K562 (cell line): ENCODE measurements at regions of chr15 and their contacts with region 1.

Region 1: DNA sequence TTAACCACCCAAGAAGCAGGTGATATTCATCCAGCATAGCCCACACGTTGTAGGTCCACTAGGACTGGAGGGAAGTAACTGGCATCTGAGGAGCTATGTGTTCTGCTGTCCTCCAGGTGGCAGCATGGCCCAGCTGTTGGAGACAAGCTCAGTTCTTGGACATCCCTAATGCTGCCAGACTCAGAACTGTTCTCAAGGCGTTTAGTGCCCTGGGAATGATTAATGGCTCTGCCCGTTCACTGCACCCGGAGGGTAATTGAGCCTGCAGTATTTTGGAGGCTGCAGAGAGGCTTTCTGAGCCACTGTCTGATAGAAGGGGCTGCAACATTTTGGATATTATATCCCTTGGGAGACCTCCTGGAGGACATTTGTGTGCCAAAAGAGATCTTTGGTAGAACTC is 521.2 kb upstream of the SEMA6D start:
- DNase-seq: peak; percentile 15 to 52 (median 22)
- ATAC-seq: peak; percentile 63; the same call in 2 of the 3 replicates
- H3K4me3 ChIP-seq: no peak overlapping the region
- H3K27ac ChIP-seq: no peak overlapping the region
- H3K4me1 ChIP-seq: no peaks in the 10 kb centered on the region
- H3K27me3 ChIP-seq: no peaks in the 10 kb centered on the region
- CTCF ChIP-seq: peak; percentile 37 to 61 (median 57)
- EP300 ChIP-seq: no peak
- POLR2A ChIP-seq: no peak
- RAD21 ChIP-seq: peak; percentile 76

Region 2: DNA sequence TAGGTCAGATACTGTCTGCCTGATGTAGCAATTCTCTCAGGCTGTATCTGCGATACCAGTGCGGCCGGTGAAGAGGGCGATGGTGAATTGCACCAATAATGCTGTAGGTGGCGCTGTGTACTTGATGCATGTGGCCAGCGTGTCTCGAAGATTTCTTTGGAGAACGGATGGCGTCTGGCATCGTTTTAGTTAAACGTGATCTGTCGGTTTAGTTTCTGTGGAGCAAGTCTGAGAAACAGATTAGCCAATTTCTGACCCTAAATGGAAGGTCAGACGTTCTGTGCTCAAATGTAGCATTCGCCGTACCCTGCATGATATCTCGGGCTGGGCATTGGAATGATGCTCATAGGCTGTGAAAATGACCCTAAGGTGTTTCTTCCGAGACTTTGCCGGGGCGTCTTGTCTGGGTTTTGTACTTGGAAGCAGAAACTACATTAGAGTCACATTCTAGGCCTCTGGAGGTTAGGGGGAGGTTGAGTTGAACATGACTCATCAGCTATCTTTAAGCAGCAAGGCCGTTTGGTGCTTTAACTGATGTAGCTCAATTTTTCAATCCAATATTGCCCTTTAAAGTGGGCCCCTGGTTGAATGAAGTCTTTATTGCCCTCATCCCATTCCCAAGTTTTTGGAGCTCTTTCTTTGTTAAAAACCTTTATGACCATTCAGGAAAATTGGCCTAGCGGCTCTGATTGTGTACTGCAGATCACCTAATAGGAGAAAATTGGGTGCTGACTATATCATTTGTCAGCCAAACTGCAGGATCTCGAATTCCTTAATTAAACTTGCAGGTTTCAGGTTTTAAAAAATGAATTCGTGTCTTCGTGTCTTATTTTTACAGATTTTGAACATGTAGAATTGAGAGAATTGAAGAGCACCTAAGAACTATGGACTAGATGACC is 1481.2 kb before region 1 on chr15:
- CTCF ChIA-PET with region 1: no interaction called
- POLR2A ChIA-PET with region 1: no interaction called
- in situ Hi-C with region 1: no loop called
- intact Hi-C with region 1: loop called (anchors 10 kb)
- DNase-seq: peak; percentile 23 to 60 (median 53)
- ATAC-seq: peak; percentile 87
- H3K4me3 ChIP-seq: no peak overlapping the region
- H3K27ac ChIP-seq: no peak overlapping the region
- H3K4me1 ChIP-seq: peaks cover 0 to 8% of the 10 kb centered on the region in 2 experiments; a peak in 3 of 5 replicates
- H3K27me3 ChIP-seq: no peaks in the 10 kb centered on the region
- CTCF ChIP-seq: peak; percentile 75 to 86 (median 84)
- EP300 ChIP-seq: no peak
- POLR2A ChIP-seq: no peak
- RAD21 ChIP-seq: peak; percentile 36 to 65; a peak in 3 of 4 replicates

Region 3: GRCh38 chr15:48285329-48286214 is 1089.5 kb after region 1 on chr15:
- CTCF ChIA-PET with region 1: interaction called, 4 read pairs
- POLR2A ChIA-PET with region 1: no interaction called
- in situ Hi-C with region 1: no loop called
- intact Hi-C with region 1: loop called (anchors 5 kb)
- DNase-seq: peak; percentile 49 to 72 (median 56)
- ATAC-seq: peak; percentile 91
- H3K4me3 ChIP-seq: no peak overlapping the region
- H3K27ac ChIP-seq: no peak overlapping the region
- H3K4me1 ChIP-seq: no peaks in the 10 kb centered on the region
- H3K27me3 ChIP-seq: no peaks in the 10 kb centered on the region
- CTCF ChIP-seq: peak; percentile 43 to 72 (median 64); a peak in 5 of 6 replicates
- EP300 ChIP-seq: no peak
- POLR2A ChIP-seq: no peak
- RAD21 ChIP-seq: peak; percentile 43 to 59; a peak in 3 of 4 replicates

Region 4: DNA sequence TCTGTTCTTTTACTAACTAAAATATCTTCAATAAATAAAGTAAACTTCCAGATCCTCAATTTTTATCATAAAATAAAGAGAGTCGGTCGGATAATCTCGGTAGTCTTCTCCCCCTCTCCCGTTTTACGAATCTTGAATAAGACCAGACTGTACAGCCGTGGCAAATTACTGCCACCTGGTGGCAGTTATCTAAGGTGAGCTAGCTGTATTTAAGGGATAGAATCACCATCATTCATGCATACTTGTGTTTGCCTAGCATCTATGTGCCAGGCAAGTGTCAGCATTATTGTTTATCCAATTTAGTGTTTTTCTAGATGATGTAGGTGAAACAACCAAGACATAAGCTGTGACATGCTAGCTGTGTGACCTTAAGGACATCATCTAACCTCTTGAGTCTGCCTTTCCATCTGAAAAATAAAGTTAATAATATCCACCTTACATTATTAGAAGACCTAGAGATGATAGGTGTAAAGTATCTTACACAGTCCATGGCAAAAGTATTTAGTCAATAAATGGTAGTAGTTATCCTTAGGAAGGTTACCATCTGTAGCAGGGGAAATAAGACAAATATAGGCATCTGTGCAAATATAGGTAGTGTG is 1156.5 kb after region 1 on chr15:
- CTCF ChIA-PET with region 1: no interaction called
- POLR2A ChIA-PET with region 1: no interaction called
- in situ Hi-C with region 1: no loop called
- intact Hi-C with region 1: loop called (anchors 5 kb)
- DNase-seq: peak; percentile 56 to 83 (median 62)
- ATAC-seq: peak; percentile 96
- H3K4me3 ChIP-seq: no peak overlapping the region
- H3K27ac ChIP-seq: no peak overlapping the region
- H3K4me1 ChIP-seq: no peaks in the 10 kb centered on the region; a peak in 2 of 5 replicates
- H3K27me3 ChIP-seq: no peaks in the 10 kb centered on the region
- CTCF ChIP-seq: peak; percentile 72 to 84 (median 79)
- EP300 ChIP-seq: no peak
- POLR2A ChIP-seq: no peak
- RAD21 ChIP-seq: peak; percentile 69 to 85